Activated CD4-positive, alpha-beta memory T cell treated with anti-CD3 and anti-CD28 coated beads for 36 hours (primary cell): ENCODE measurements at regions of chr13 and their contacts with region 1.

Region 1: DNA sequence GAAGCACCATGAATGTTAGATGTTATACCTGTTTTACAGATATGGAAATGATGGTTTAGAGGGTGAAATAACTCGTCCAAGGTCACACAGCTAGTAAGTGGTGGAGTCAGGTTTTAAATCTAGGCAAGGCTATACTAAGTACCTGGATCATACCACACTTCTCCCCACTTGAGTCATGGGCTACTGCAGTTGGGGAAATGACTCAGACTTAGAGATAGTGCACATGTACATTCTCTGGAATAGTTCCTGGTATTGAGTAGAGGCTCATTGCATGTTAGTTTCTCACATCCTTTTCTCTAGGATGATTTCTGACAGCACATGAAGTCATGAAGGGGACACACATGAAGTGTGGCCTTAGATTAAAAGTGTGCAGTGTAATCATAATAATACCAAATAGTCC is 76.2 kb upstream of the TNFSF11 start:
- DNase-seq: peak; percentile 65
- H3K4me3 Mint-ChIP-seq: peak overlapping the region; percentile 12
- H3K27ac Mint-ChIP-seq: peak overlapping the region; percentile 86
- H3K4me1 Mint-ChIP-seq: peaks cover 54% of the 10 kb centered on the region
- H3K27me3 Mint-ChIP-seq: no peaks in the 10 kb centered on the region

Region 2: DNA sequence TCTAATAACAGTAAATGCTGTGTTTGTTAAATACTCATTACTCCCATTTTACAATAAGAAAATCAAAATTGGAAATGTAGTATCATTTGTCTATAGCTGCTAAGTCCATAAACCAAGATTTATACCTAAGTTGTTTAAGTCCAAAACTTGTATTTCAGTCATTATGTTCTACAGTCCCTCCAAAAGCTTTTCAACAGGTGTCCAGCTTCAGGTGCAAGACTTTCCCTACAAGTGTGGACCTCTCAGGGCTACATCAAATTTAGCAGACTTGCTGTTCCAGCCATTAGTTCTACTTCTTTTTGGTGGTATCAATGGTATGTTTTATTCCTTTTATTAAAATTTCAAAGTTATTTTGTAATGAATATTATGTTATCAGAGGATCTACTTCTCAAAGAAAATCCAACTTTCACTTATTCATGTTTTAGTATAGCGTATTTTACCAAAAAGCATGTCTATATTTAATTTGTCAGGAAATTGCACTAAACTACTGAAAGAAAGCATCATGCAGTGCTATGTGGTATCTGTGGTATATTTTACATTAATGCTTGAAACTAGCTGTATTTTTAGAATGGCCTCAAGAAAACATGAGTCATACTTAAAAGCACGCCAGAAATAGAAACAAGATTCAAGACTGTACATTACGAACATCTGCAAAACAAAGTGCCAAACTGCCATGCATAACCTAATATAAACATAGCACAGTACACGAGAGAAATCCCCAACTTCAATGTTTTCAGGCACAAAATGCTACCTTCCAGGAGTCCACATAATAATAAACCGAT is 581.4 kb before region 1 on chr13:
- CTCF ChIA-PET with region 1: no interaction called
- POLR2A ChIA-PET with region 1: no interaction called
- intact Hi-C with region 1: loop called (anchors 2 kb)
- DNase-seq: no peak
- H3K4me3 Mint-ChIP-seq: peak overlapping the region; percentile 54
- H3K27ac Mint-ChIP-seq: peak overlapping the region; percentile 84
- H3K4me1 Mint-ChIP-seq: peaks cover 29% of the 10 kb centered on the region
- H3K27me3 Mint-ChIP-seq: no peaks in the 10 kb centered on the region

Region 3: DNA sequence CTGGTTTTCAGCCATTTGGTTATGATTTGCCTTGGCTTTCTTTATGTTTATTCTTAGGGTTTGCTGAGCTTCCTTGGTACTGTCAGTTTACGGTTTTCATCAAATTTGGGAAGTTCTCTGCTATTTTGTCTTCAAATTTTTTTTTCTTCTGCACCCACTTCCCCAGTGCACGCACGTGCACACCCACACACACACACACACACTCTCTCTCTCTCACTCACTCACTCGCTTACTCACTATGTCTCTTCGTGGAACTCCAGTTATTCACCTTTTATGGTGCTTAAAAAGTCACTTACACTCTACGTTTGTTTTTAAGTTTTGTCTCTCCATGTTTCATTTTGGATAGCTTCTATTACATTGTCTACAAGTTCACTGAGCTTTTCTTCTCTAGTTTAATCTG is 218.7 kb before region 1 on chr13:
- CTCF ChIA-PET with region 1: no interaction called
- POLR2A ChIA-PET with region 1: interaction called, 5 read pairs
- intact Hi-C with region 1: loop called (anchors 1 kb)
- DNase-seq: peak; percentile 42
- H3K4me3 Mint-ChIP-seq: no peak overlapping the region
- H3K27ac Mint-ChIP-seq: no peak overlapping the region
- H3K4me1 Mint-ChIP-seq: peaks cover 50% of the 10 kb centered on the region
- H3K27me3 Mint-ChIP-seq: no peaks in the 10 kb centered on the region

Region 4: DNA sequence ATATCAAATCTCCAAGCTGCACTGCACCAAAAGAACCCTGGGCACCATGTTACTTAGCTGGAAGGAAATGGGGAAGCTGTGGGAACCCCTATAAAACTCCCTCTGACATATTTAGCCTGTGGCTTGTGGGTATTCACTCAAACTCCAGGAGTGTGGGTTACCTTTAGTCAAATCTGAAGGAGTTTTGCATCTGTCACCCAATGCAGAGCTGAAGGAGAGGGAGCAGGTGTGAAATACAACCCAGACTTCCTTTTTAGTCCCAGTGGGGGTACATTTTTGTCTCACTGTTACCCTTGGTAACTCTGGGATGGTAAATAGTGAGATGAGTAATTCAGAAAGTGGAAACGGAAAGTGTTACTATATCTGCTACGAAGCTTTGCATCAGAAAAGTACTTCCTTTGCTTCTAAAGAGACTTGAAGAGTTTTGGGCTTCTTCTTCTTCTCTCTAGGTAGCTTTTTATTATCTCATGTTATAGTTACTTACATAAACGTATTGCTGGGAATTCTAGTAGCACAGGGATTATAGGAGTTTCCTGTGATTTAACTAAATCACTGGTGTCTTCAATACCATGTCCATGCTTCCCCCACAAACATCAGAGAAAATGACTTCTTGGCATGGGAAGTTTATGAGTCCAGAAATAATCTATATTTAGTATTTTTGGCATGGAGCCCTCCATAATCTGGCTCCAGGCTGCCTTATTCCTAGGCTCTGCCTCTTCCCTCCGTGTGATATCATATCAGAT is 120.0 kb before region 1 on chr13:
- CTCF ChIA-PET with region 1: no interaction called
- POLR2A ChIA-PET with region 1: interaction called, 7 read pairs
- intact Hi-C with region 1: loop called (anchors 1 kb)
- DNase-seq: peak; percentile 61
- H3K4me3 Mint-ChIP-seq: peak overlapping the region; percentile 30
- H3K27ac Mint-ChIP-seq: peak overlapping the region; percentile 92
- H3K4me1 Mint-ChIP-seq: peaks cover 61% of the 10 kb centered on the region
- H3K27me3 Mint-ChIP-seq: no peaks in the 10 kb centered on the region

Region 5: GRCh38 chr13:42547612-42548011 is 49.8 kb after region 1 on chr13:
- CTCF ChIA-PET with region 1: no interaction called
- POLR2A ChIA-PET with region 1: interaction called, 5 read pairs
- intact Hi-C with region 1: loop called (anchors 2 kb)
- DNase-seq: peak; percentile 37
- H3K4me3 Mint-ChIP-seq: no peak overlapping the region
- H3K27ac Mint-ChIP-seq: no peak overlapping the region
- H3K4me1 Mint-ChIP-seq: peaks cover 22% of the 10 kb centered on the region
- H3K27me3 Mint-ChIP-seq: peaks cover 2% of the 10 kb centered on the region

Region 6: DNA sequence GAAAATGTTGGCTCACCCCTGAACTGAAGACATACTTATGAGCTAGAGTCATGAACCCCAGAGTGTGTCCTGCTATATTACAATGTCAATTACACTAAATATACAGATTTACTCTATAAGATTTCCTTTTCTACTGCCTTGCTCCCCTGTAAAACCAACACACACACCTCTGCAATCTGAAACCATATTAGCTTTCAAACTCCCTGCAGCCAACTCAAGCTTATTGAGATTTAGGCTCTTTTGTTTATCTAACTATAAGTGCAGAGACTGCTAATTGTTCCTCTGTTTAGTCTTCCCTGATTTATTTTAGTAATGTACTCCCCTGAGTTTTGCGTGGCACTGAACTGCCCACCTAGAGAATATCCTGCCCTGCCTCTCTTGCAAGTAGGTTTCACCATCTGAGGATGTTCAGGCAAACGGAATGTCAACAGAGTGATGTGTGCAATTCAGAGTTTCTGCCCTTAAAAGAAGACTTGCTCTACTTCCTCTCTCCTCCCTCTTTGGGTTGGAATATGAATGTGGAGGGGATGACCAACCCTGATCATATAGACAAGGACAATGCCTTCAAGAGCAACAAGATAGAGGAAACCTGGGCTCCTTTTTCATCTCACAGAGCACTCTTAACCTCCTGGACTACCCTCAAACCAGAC is 305.9 kb after region 1 on chr13:
- CTCF ChIA-PET with region 1: no interaction called
- POLR2A ChIA-PET with region 1: no interaction called
- intact Hi-C with region 1: loop called (anchors 5 kb)
- DNase-seq: no peak
- H3K4me3 Mint-ChIP-seq: no peak overlapping the region
- H3K27ac Mint-ChIP-seq: no peak overlapping the region
- H3K4me1 Mint-ChIP-seq: no peaks in the 10 kb centered on the region
- H3K27me3 Mint-ChIP-seq: peaks cover 6% of the 10 kb centered on the region

Region 7: DNA sequence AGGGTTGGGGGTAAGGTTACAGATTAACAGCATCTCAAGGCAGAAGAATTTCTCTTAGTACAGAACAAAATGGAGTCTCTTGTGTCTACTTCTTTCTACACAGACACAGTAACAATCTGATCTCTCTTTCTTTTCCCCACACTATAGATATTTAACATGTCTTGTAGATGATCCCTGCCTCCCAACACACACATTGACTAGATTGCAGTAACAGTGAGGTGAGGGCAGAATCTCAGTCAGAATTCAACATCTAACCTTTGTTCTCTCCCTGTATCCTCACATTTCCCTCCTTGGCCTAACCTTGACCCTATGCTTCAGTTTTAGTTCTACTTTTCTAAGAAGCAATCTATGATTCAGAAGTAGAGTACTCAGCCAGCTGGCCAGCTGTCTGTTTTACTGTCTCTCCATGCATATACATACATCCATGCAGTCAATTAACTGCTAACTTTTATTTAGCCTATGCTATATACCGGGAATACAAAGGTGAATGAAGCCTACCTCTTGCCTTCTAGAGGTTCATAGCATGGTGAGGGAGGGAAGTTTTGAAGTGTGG is 543.6 kb after region 1 on chr13:
- CTCF ChIA-PET with region 1: no interaction called
- POLR2A ChIA-PET with region 1: no interaction called
- intact Hi-C with region 1: loop called (anchors 10 kb)
- DNase-seq: no peak
- H3K4me3 Mint-ChIP-seq: no peak overlapping the region
- H3K27ac Mint-ChIP-seq: no peak overlapping the region
- H3K4me1 Mint-ChIP-seq: peaks cover 62% of the 10 kb centered on the region
- H3K27me3 Mint-ChIP-seq: no peaks in the 10 kb centered on the region